Esophagus muscularis mucosa (tissue), 4 donors: ENCODE measurements at regions of chr11 and their contacts with region 1.

Region 1: GRCh38 chr11:95835768-95836488 is 45.6 kb downstream of the CEP57 start:
- DNase-seq: peak; percentile 92
- H3K4me3 ChIP-seq: no peak overlapping the region
- H3K27ac ChIP-seq: peak overlapping the region in 2 of 4 donors; percentile 7 to 24
- H3K4me1 ChIP-seq: peaks cover 4 to 9% (median 8%) of the 10 kb centered on the region in 4 donors
- H3K27me3 ChIP-seq: no peaks in the 10 kb centered on the region
- CTCF ChIP-seq: peak; percentile 77 to 91 (median 90)
- EP300 ChIP-seq: no peak
- POLR2A ChIP-seq: no peak

Region 2: DNA sequence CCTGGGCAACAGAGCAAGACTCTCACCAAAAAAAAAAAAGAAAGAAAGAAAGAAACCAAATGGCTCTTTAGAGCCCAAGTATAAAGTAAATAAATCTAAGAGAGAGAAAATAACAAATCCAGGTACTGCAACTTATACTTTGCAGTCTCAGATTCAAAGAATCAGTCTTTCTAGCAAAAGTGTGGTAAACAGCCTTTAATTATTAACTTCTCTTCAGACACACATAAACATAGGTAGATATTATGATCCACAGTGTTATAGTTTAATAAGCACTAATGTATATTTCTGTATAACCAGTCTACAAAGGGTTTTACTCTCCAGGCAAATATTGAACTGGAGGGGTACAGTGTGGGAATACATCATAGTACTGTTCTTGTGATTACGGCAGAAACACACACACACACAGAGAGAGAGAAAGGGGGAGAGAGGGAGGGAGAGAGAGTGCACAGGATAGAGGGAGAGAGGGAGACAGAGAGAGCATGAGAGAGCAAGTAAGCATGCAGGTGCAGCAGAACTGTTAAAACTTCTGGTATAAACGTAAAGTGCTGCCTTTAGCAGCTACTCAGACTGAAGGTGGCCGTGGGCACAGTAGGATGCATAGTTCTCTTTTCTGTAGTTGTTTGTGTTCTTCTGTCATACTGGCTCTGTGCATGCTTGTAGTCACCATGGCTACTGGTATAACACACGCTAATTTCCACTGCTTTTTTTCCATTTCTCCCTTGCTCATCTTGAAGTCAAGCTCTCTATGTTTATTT is 55.7 kb after region 1 on chr11:
- intact Hi-C with region 1: no loop called
- DNase-seq: no peak
- H3K4me3 ChIP-seq: no peak overlapping the region
- H3K27ac ChIP-seq: peak overlapping the region in 1 of 4 donors; percentile 4
- H3K4me1 ChIP-seq: peaks cover 8 to 45% (median 19%) of the 10 kb centered on the region in 4 donors
- H3K27me3 ChIP-seq: no peaks in the 10 kb centered on the region
- CTCF ChIP-seq: no peak
- EP300 ChIP-seq: no peak
- POLR2A ChIP-seq: no peak

Region 3: DNA sequence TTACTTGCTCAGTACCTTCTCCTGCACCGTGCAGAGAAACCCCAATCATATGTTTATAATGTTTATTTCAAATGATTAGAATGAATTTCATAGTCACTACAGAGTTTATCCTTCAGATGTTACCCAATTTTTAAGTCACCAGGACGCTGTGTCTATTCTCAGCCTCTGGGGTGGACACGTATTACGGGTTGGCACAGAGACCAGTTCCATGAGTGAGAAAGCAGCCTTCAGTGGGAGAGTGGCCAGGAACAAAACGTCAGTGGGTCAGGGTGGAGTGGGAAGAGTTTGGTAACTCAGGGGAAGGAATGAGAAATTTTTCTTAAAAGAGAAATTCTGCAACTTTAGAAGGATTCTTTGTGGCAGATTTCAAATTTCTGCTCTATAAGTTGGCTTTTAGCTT is 165.1 kb after region 1 on chr11:
- intact Hi-C with region 1: no loop called
- DNase-seq: peak; percentile 97
- H3K4me3 ChIP-seq: peak overlapping the region in 1 of 4 donors; percentile 3
- H3K27ac ChIP-seq: peak overlapping the region; percentile 68 to 76 (median 71)
- H3K4me1 ChIP-seq: peaks cover 26 to 29% (median 28%) of the 10 kb centered on the region in 4 donors
- H3K27me3 ChIP-seq: no peaks in the 10 kb centered on the region
- CTCF ChIP-seq: peak in 1 of 3 experiments; percentile 9
- EP300 ChIP-seq: no peak
- POLR2A ChIP-seq: no peak

Region 4: DNA sequence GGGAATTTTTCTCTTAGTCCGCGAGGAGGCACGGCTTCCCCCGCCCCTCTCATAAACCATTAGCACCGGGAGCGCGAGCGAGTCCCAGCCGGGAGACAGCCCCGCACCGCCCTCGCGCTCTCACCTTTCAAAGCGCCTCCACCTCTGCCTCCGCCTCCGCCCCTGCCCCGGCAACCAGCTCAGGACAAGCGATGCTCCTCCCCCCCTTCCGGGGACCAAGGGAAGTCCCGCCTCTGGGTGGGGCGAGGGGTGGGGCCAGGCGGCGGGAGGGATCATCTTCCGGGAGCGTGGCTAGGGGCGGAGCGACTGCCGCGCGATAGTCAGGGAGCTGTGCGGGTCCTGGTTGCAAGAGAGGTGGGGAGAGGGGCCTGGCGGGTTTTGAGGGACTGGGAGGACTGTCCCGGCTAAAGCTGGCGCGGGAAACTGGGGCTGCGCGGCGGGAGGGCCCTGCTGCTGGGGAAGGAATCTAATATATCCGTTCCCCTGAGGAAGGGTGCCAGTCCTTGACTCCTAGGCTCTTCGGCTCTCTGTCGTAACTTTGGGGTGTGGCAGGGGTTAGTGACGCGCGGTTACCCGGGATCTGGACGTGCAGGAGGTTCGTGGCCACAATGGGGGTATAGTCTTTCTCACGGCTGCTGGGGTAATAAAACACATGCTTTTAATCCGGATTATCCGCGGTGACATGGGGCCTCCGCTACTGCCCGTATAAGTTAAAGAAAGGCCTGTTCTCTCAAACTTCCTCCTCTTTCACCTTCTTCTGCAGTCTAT is 554.0 kb after region 1 on chr11 and contains the starts of genes CCDC82 and JRKL:
- intact Hi-C with region 1: loop called (anchors 5 kb)
- DNase-seq: peak; percentile 98
- H3K4me3 ChIP-seq: peak within 1 kb of the TSS; percentile 82 to 99 (median 90)
- H3K27ac ChIP-seq: peak within 1 kb of the TSS; percentile 87 to 90 (median 89)
- H3K4me1 ChIP-seq: peaks cover 14 to 32% (median 21%) of the 10 kb centered on the region in 4 donors
- H3K27me3 ChIP-seq: no peaks in the 10 kb centered on the region
- CTCF ChIP-seq: peak in 1 of 3 experiments; percentile 12
- EP300 ChIP-seq: no peak
- POLR2A ChIP-seq: peak; percentile 87
- total RNA-seq, gene CCDC82: 12.3 to 23.3 (median 14.7) TPM
- total RNA-seq, gene JRKL: 4.5 to 7.9 (median 6.9) TPM

Region 5: GRCh38 chr11:96424693-96425092 is 588.8 kb after region 1 on chr11:
- intact Hi-C with region 1: loop called (anchors 2 kb)
- DNase-seq: no peak
- H3K4me3 ChIP-seq: no peak overlapping the region
- H3K27ac ChIP-seq: no peak overlapping the region
- H3K4me1 ChIP-seq: no peaks in the 10 kb centered on the region
- H3K27me3 ChIP-seq: peaks cover 0 to 3% (median 0%) of the 10 kb centered on the region in 4 donors
- CTCF ChIP-seq: no peak
- EP300 ChIP-seq: no peak
- POLR2A ChIP-seq: no peak